K562 (cell line): ENCODE measurements at regions of chr6 and their contacts with region 1.

Region 1: DNA sequence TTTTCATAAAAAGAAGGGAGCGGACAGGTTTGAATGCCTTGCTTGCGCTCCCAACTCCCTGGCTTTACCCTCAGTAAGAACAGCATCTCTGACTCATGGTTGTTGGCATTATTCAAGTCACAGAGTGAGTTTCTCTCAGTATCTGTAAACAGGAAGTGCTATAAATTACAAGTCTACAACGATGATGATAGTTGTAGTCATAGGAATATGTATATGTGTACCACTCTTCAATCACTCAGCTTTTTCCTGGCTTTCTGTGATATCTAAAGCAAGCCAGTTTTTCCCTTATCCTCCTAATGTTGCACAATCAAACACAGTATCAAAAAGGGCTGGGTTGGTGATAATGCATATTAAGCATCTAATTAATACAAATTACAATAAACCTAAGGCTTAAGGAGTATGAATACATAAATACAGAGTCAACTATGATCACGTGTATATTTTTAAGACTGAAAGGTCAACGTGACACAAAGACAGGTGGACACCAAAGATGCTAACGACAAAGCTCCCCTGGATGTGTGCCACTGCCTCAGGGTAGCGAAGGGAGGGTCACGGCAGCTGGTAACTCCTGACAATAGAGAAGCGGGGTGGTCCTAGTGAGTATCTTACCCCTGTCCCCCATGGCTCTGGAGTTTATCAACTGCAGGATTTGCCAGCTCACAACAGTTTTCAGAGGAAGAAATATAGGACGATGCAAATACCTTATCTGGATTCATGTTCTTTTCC is 202.8 kb downstream of the BTBD9 start:
- DNase-seq: no peak
- ATAC-seq: no peak
- H3K4me3 ChIP-seq: no peak overlapping the region
- H3K27ac ChIP-seq: no peak overlapping the region
- H3K4me1 ChIP-seq: no peaks in the 10 kb centered on the region
- H3K27me3 ChIP-seq: peaks cover 9 to 10% of the 10 kb centered on the region in 2 experiments; a peak in 4 of 5 replicates
- CTCF ChIP-seq: no peak
- EP300 ChIP-seq: no peak
- POLR2A ChIP-seq: no peak
- RAD21 ChIP-seq: no peak

Region 2: DNA sequence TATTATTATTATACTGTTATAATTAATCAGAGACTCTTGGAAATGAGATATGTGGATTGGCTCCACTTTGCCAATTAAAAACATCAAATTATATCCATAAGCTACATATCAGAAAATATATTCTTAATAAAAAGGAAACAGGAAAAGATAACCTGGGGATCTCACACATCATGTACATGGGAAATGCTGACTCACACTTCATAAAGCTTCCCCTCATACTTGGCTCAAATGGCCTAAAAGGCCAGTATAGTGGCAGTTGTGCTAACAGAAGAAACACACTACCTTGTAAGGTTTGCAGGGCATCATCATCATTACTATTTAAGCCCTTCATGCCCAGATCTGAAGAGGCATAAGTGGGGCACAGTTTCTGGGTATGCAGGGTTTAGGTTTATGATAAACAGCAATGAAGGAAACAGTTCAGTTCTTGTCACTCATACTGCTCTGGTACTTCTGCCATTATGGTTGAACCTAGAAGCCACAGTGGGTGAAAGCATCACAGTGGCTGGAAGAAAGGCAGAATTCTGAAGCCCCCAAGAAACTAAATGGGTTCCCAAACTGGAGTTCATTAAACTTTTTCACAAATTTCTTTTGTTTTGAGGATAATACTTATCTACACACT is 142.2 kb after region 1 on chr6:
- CTCF ChIA-PET with region 1: no interaction called
- POLR2A ChIA-PET with region 1: no interaction called
- in situ Hi-C with region 1: no loop called
- intact Hi-C with region 1: no loop called
- DNase-seq: peak; percentile 28 to 71 (median 42)
- ATAC-seq: peak; percentile 85
- H3K4me3 ChIP-seq: no peak overlapping the region
- H3K27ac ChIP-seq: peak overlapping the region; percentile 16
- H3K4me1 ChIP-seq: peaks cover 0 to 34% of the 10 kb centered on the region in 2 experiments; a peak in 3 of 5 replicates
- H3K27me3 ChIP-seq: no peaks in the 10 kb centered on the region; a peak in 1 of 5 replicates
- CTCF ChIP-seq: no peak
- EP300 ChIP-seq: no peak
- POLR2A ChIP-seq: no peak
- RAD21 ChIP-seq: no peak

Region 3: GRCh38 chr6:39471954-39472659 is 1035.2 kb after region 1 on chr6:
- CTCF ChIA-PET with region 1: no interaction called
- POLR2A ChIA-PET with region 1: no interaction called
- in situ Hi-C with region 1: no loop called
- intact Hi-C with region 1: loop called (anchors 10 kb)
- DNase-seq: no peak
- ATAC-seq: no peak
- H3K4me3 ChIP-seq: no peak overlapping the region
- H3K27ac ChIP-seq: no peak overlapping the region
- H3K4me1 ChIP-seq: no peaks in the 10 kb centered on the region
- H3K27me3 ChIP-seq: no peaks in the 10 kb centered on the region; a peak in 2 of 5 replicates
- CTCF ChIP-seq: no peak
- EP300 ChIP-seq: no peak
- POLR2A ChIP-seq: no peak
- RAD21 ChIP-seq: no peak